ENCODE measurements at regions of chr5 and their contacts with region 1.

Region 1: DNA sequence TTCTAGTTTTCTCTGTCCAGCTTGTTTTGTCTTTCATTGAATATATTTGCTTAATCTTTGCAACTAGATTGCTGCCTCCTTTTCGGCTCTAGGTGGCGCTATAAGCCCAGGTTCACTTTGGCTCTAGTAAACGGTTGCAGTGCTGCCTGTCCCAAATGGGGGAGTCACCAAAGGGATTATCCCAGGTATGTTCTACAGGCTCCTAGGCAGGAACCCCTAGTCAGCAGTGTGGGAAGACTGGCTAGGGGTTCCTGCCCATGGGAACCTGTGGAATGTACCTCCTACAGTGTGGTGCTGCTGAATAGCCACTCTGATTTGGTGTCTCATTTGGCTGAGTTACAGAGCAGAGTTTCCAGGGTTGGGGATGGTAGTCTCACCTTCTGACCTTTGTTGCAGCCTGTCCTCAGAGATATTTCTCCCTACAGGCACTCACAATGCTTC is 85.2 kb downstream of the ARSB start:
- H3K4me3 Mint-ChIP-seq: no peak overlapping the region
- H3K27ac Mint-ChIP-seq: no peak overlapping the region
- H3K4me1 Mint-ChIP-seq: peaks cover 28% of the 10 kb centered on the region
- H3K27me3 Mint-ChIP-seq: no peaks in the 10 kb centered on the region

Region 2: DNA sequence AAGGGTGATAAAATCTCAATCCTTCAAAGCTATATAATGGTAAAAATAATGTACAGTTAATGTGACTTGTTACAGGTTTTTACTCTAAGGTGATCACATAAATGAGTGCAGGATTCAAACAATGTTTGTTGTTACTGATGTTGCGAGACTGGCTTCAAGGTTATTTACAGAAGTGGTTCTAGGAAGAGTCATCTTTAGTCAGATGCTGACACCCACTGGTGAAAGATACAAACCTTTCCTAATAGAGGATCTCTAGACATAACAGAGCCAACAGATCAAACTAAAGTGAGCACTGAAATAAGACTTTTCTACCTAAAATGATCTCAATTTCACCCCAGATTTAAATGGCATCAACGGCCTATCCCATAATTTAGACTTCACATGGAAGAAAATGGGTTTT is 64.9 kb after region 1 on chr5:
- intact Hi-C with region 1: loop called (anchors 2 kb)
- H3K4me3 Mint-ChIP-seq: no peak overlapping the region
- H3K27ac Mint-ChIP-seq: no peak overlapping the region
- H3K4me1 Mint-ChIP-seq: no peaks in the 10 kb centered on the region
- H3K27me3 Mint-ChIP-seq: no peaks in the 10 kb centered on the region

Measured in dendritic cell treated with granulocyte-macrophage colony-stimulating factor and Interleukin-4, amounts not matched to agents 40 ng/mL and 50 ng/mL, for 4 days (primary cell).